H1 (cell line): ENCODE measurements at regions of chr13 and their contacts with region 1.

Region 1: DNA sequence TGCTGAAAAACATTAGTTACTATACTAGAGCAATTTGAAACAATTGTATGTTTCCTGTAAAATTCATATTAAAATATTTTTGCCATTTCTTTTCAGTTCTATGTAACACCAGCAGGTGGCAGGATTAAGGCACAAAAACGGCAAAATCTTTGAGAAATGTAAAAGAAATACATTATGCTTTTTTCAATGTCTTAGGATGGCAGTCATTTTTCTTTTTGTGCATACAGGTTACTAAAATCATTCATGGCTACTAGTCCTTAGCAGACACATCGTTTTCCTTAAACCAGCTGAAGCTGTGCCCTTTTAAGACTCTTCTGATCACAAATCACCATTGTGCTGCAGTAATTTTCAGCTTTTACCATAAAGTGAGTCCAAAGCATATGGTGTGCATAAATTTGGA is 800.7 kb upstream of the SLITRK5 start:
- DNase-seq: no peak
- H3K4me3 ChIP-seq: no peak overlapping the region
- H3K27ac ChIP-seq: no peak overlapping the region
- H3K4me1 ChIP-seq: no peaks in the 10 kb centered on the region
- H3K27me3 ChIP-seq: no peaks in the 10 kb centered on the region
- CTCF ChIP-seq: peak in 1 of 3 experiments; percentile 50; a peak in 2 of 4 replicates
- EP300 ChIP-seq: no peak
- POLR2A ChIP-seq: no peak
- RAD21 ChIP-seq: peak; percentile 53 to 64

Region 2: DNA sequence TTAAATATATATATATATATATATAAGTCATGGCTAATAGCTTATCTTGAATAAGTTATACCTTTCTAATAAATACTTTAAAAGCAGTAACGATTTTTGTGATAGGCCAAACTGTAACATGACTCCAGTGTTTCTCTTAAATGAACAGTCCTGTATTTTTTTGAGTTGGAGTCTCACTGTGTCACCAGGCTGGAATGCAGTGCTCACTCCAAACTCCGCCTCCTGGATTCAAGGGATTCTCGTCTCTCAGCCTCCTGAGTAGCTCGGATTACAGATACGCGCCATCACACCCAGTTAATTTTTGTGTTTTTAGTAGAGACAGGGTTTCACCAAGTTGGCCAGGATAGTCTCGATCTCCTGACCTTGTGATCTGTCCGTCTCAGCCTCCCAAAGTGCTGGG is 13.5 kb before region 1 on chr13:
- CTCF ChIA-PET with region 1: interaction called, 11 read pairs
- POLR2A ChIA-PET with region 1: no interaction called
- DNase-seq: no peak
- H3K4me3 ChIP-seq: no peak overlapping the region
- H3K27ac ChIP-seq: no peak overlapping the region
- H3K4me1 ChIP-seq: peaks cover 0 to 1% (median 0%) of the 10 kb centered on the region in 4 experiments; a peak in 1 of 7 replicates
- H3K27me3 ChIP-seq: no peaks in the 10 kb centered on the region
- CTCF ChIP-seq: no peak
- EP300 ChIP-seq: no peak
- POLR2A ChIP-seq: no peak
- RAD21 ChIP-seq: no peak

Region 3: GRCh38 chr13:87274209-87274819 is 403.9 kb after region 1 on chr13:
- CTCF ChIA-PET with region 1: interaction called, 30 read pairs
- POLR2A ChIA-PET with region 1: no interaction called
- DNase-seq: peak in 1 of 2 experiments; percentile 72
- H3K4me3 ChIP-seq: no peak overlapping the region
- H3K27ac ChIP-seq: no peak overlapping the region
- H3K4me1 ChIP-seq: no peaks in the 10 kb centered on the region; a peak in 1 of 7 replicates
- H3K27me3 ChIP-seq: no peaks in the 10 kb centered on the region
- CTCF ChIP-seq: peak in 2 of 3 experiments; percentile 52 to 70; a peak in 2 of 4 replicates
- EP300 ChIP-seq: no peak
- POLR2A ChIP-seq: no peak
- RAD21 ChIP-seq: peak; percentile 82